ENCODE measurements at regions of chr15 and their contacts with region 1.

Region 1: GRCh38 chr15:99076552-99077308 is 28.1 kb upstream of the SYNM start:
- DNase-seq: peak; percentile 35
- H3K4me3 ChIP-seq: peak overlapping the region; percentile 2; the same call in 1 of the 2 replicates
- H3K27me3 ChIP-seq: peaks cover 2% of the 10 kb centered on the region; the same call in 1 of the 2 replicates
- CTCF ChIP-seq: peak; percentile 83

Region 2: GRCh38 chr15:98442379-98442833 is 634.3 kb before region 1 on chr15:
- CTCF ChIA-PET with region 1: interaction called, 20 read pairs
- POLR2A ChIA-PET with region 1: no interaction called
- DNase-seq: peak; percentile 57
- H3K4me3 ChIP-seq: no peak overlapping the region
- H3K27me3 ChIP-seq: peaks cover 5% of the 10 kb centered on the region
- CTCF ChIP-seq: peak; percentile 84

Region 3: GRCh38 chr15:98779463-98780071 is 297.2 kb before region 1 on chr15:
- CTCF ChIA-PET with region 1: interaction called, 11 read pairs
- POLR2A ChIA-PET with region 1: no interaction called
- DNase-seq: no peak
- H3K4me3 ChIP-seq: no peak overlapping the region
- H3K27me3 ChIP-seq: no peaks in the 10 kb centered on the region
- CTCF ChIP-seq: peak; percentile 96

Region 4: GRCh38 chr15:98904544-98904943 is 172.2 kb before region 1 on chr15:
- CTCF ChIA-PET with region 1: interaction called, 18 read pairs
- POLR2A ChIA-PET with region 1: no interaction called
- DNase-seq: no peak
- H3K4me3 ChIP-seq: no peak overlapping the region
- H3K27me3 ChIP-seq: no peaks in the 10 kb centered on the region
- CTCF ChIP-seq: peak; percentile 83

Region 5: GRCh38 chr15:99090011-99090699 is 13.4 kb after region 1 on chr15:
- CTCF ChIA-PET with region 1: interaction called, 10 read pairs
- POLR2A ChIA-PET with region 1: no interaction called
- DNase-seq: no peak
- H3K4me3 ChIP-seq: no peak overlapping the region
- H3K27me3 ChIP-seq: no peaks in the 10 kb centered on the region; the same call in 1 of the 2 replicates
- CTCF ChIP-seq: no peak

Region 6: DNA sequence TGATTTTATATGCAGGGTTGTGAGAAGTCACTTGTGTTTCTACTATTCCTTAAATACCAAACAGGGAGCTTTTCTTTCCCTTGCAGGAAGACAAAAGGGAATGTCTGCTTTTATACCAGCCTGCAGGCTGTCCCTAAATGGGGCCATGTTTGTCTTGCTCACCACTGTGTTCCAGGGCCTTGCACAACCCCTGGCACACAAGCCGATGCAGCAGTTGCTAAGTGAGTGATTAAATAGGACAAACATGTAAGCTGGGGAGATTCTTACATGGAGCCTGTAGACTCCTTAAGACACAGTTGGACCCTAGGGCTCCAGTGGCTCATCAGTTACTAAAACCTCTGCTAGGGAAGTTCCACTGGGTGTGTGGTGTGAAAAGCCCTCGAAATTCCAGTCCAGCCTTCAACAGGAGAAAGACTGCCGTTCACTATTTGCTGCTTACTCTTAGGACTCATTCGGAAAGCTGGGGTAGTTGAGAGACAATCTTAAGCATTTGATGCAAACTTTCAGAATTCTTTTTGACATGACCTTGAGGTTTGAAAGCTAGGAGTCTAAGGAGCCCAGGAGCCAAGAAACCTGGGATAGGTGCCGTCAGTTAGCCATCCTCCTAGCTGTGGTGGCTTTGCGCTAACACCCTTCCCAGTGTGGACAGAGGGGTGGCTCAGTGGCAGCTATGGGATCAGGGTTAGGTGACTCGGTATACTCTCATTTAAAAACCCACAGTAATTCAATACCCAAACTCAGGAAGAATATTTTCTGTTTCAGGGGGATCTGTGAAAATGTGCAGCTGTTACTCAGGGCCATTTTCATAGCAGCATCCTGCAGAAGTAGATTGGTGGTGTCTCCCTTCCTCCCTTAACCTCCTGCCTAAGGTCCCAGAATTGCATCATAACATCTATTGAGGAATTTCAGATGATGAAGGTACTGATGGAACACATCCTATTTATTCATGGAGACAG is 67.2 kb after region 1 on chr15:
- CTCF ChIA-PET with region 1: no interaction called
- POLR2A ChIA-PET with region 1: no interaction called
- DNase-seq: peak; percentile 17
- H3K4me3 ChIP-seq: no peak overlapping the region
- H3K27me3 ChIP-seq: no peaks in the 10 kb centered on the region
- CTCF ChIP-seq: no peak

Region 7: GRCh38 chr15:99224372-99225214 is 147.9 kb after region 1 on chr15:
- CTCF ChIA-PET with region 1: no interaction called
- POLR2A ChIA-PET with region 1: no interaction called
- DNase-seq: no peak
- H3K4me3 ChIP-seq: no peak overlapping the region
- H3K27me3 ChIP-seq: no peaks in the 10 kb centered on the region
- CTCF ChIP-seq: no peak

Region 8: GRCh38 chr15:99275525-99276128 is 198.9 kb after region 1 on chr15:
- CTCF ChIA-PET with region 1: no interaction called
- POLR2A ChIA-PET with region 1: no interaction called
- DNase-seq: no peak
- H3K4me3 ChIP-seq: no peak overlapping the region
- H3K27me3 ChIP-seq: no peaks in the 10 kb centered on the region
- CTCF ChIP-seq: no peak